ENCODE measurements at regions of chr1 and their contacts with region 1.

Region 1: DNA sequence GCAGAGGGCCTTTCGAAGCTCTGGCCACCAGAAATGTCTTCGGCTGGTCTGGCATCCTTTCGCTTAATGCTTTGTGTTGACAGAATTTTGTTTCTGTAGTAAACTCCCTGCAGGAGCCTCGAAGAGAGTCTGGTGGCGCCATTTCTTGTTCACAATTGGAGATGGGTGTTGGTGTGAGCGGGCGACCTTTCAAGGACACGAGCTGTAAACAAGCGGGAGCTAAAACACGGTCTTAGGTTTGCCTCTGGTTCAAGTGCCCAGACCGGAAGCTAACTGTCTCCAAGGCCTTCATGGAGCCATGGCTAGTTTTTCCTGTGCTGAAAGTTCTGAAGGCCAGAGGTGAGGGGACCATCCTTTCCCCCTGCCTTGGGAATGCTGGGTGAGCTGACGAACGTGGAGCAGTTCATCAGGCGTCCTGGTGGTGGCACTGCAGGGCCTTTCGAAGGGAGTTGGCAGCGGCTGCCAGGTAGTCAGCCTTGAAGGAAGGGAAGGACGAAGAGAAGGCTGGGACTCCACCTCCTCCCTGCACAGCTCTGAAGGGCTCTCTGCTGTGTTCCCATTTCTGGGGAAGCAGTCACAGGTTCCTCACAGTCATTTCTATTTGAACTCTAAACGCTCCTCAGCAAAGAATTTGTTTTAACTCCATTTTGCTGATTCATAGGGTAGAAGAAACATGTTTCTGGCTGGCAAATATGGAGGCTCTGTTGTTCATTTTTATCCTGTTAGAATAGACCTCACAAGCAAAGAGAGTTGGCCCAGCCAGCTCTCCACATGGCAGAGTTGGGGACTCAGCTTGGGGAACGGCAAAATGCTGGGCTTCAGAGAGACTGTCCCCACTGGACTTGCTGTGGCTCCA is 35.2 kb downstream of the URB2 start:
- DNase-seq: peak; percentile 84 to 90 (median 89)
- H3K4me3 ChIP-seq: no peak overlapping the region
- H3K27ac ChIP-seq: peak overlapping the region in 1 of 2 donors; percentile 49
- H3K4me1 ChIP-seq: peaks cover 3% of the 10 kb centered on the region
- H3K27me3 ChIP-seq: no peaks in the 10 kb centered on the region
- CTCF ChIP-seq: peak; percentile 80 to 94 (median 92)
- EP300 ChIP-seq: no peak
- POLR2A ChIP-seq: no peak

Region 2: GRCh38 chr1:229596925-229597699 is 64.1 kb before region 1 on chr1:
- intact Hi-C with region 1: no loop called
- DNase-seq: no peak
- H3K4me3 ChIP-seq: no peak overlapping the region
- H3K27ac ChIP-seq: no peak overlapping the region
- H3K4me1 ChIP-seq: peaks cover 2% of the 10 kb centered on the region
- H3K27me3 ChIP-seq: no peaks in the 10 kb centered on the region
- CTCF ChIP-seq: no peak
- EP300 ChIP-seq: no peak
- POLR2A ChIP-seq: no peak

Region 3: GRCh38 chr1:229862017-229862774 is 200.9 kb after region 1 on chr1:
- intact Hi-C with region 1: loop called in 1 of 4 experiments (anchors 10 kb)
- DNase-seq: peak; percentile 53 to 59 (median 59)
- H3K4me3 ChIP-seq: no peak overlapping the region
- H3K27ac ChIP-seq: peak overlapping the region; percentile 34 to 87
- H3K4me1 ChIP-seq: peaks cover 15% of the 10 kb centered on the region
- H3K27me3 ChIP-seq: no peaks in the 10 kb centered on the region
- CTCF ChIP-seq: no peak
- EP300 ChIP-seq: no peak
- POLR2A ChIP-seq: no peak

Region 4: GRCh38 chr1:230066466-230067404 is 405.5 kb after region 1 on chr1 and contains the start of gene GALNT2:
- intact Hi-C with region 1: loop called in 1 of 4 experiments (anchors 5 kb)
- DNase-seq: peak; percentile 87 to 91 (median 89)
- H3K4me3 ChIP-seq: peak within 1 kb of the TSS; percentile 81
- H3K27ac ChIP-seq: peak within 1 kb of the TSS; percentile 86 to 94
- H3K4me1 ChIP-seq: peaks cover 7% of the 10 kb centered on the region
- H3K27me3 ChIP-seq: no peaks in the 10 kb centered on the region
- CTCF ChIP-seq: peak in 1 of 3 donors; percentile 6
- EP300 ChIP-seq: no peak
- POLR2A ChIP-seq: peak; percentile 65
- total RNA-seq, gene GALNT2: 38.6 to 95.7 (median 83.7) TPM

Region 5: DNA sequence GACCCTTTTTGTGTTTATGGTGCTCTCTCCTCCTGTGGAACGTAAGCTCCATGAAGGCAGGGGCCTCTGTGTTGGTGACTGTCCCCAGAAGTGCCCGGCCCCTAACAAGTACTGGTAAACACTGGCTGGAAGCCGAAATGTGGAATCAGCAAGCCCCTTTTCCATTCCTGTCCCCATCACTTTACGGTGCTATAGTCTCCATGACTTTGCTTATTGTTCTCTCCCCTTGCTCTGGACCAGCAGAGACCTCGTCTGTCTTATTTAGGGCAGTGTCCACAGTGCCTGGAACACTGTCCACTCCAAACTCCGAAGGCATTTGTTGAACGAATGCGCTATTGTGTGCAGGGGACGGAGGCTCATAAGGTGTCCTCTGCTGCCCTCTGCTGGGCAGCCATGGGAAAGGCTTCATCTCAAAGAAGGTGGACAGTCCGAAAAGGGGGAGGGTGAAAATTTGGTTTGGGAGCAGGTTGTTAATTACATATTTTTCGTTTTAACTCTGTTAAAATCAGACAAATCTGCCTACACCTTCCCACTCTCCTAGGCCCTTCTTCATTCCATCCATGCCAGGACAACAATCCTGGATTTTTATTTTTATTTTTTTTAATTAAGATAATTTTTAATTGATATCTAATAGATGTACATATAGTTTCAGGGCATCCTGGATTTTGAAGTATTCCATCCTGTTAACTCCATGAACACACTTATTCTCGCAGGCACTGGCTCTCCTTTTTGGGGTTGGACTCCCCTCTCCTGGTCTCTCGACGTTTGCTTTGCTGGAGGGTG is 649.3 kb after region 1 on chr1:
- intact Hi-C with region 1: loop called (anchors 2 to 10 kb)
- DNase-seq: peak; percentile 73 to 87 (median 85)
- H3K4me3 ChIP-seq: no peak overlapping the region
- H3K27ac ChIP-seq: no peak overlapping the region
- H3K4me1 ChIP-seq: no peaks in the 10 kb centered on the region
- H3K27me3 ChIP-seq: no peaks in the 10 kb centered on the region
- CTCF ChIP-seq: peak; percentile 88 to 89 (median 88)
- EP300 ChIP-seq: no peak
- POLR2A ChIP-seq: no peak